ENCODE measurements at regions of chr18 and their contacts with region 1.

Region 1: GRCh38 chr18:58493516-58494253 is 135.2 kb downstream of the ALPK2 start:
- DNase-seq: peak; percentile 28
- ATAC-seq: peak; percentile 94
- H3K4me3 ChIP-seq: no peak overlapping the region
- H3K27ac ChIP-seq: no peak overlapping the region
- H3K4me1 ChIP-seq: peaks cover 13% of the 10 kb centered on the region
- H3K27me3 ChIP-seq: no peaks in the 10 kb centered on the region
- CTCF ChIP-seq: peak; percentile 75 to 90 (median 85)
- EP300 ChIP-seq: no peak
- POLR2A ChIP-seq: no peak
- RAD21 ChIP-seq: peak; percentile 81

Region 2: GRCh38 chr18:58195278-58195765 is 298.4 kb before region 1 on chr18:
- CTCF ChIA-PET with region 1: interaction called, 4 read pairs
- POLR2A ChIA-PET with region 1: no interaction called
- RAD21 ChIA-PET with region 1: interaction called, 3 read pairs
- SMC1A ChIA-PET with region 1: interaction called, 3 read pairs
- in situ Hi-C with region 1: no loop called
- intact Hi-C with region 1: loop called (anchors 10 kb)
- DNase-seq: no peak
- ATAC-seq: peak; percentile 83
- H3K4me3 ChIP-seq: peak overlapping the region; percentile 64
- H3K27ac ChIP-seq: no peak overlapping the region
- H3K4me1 ChIP-seq: no peaks in the 10 kb centered on the region
- H3K27me3 ChIP-seq: no peaks in the 10 kb centered on the region
- CTCF ChIP-seq: no peak
- EP300 ChIP-seq: no peak
- POLR2A ChIP-seq: no peak
- RAD21 ChIP-seq: no peak

Region 3: GRCh38 chr18:58402247-58402646 is 91.4 kb before region 1 on chr18:
- CTCF ChIA-PET with region 1: interaction called, 9 read pairs
- POLR2A ChIA-PET with region 1: interaction called, 4 read pairs
- RAD21 ChIA-PET with region 1: interaction called, 5 read pairs
- SMC1A ChIA-PET with region 1: interaction called, 5 read pairs
- in situ Hi-C with region 1: no loop called
- intact Hi-C with region 1: loop called (anchors 1 kb)
- DNase-seq: no peak
- ATAC-seq: no peak
- H3K4me3 ChIP-seq: no peak overlapping the region
- H3K27ac ChIP-seq: no peak overlapping the region
- H3K4me1 ChIP-seq: peaks cover 11% of the 10 kb centered on the region; the same call in 1 of the 2 replicates
- H3K27me3 ChIP-seq: no peaks in the 10 kb centered on the region
- CTCF ChIP-seq: no peak
- EP300 ChIP-seq: no peak
- POLR2A ChIP-seq: no peak
- RAD21 ChIP-seq: no peak

Region 4: DNA sequence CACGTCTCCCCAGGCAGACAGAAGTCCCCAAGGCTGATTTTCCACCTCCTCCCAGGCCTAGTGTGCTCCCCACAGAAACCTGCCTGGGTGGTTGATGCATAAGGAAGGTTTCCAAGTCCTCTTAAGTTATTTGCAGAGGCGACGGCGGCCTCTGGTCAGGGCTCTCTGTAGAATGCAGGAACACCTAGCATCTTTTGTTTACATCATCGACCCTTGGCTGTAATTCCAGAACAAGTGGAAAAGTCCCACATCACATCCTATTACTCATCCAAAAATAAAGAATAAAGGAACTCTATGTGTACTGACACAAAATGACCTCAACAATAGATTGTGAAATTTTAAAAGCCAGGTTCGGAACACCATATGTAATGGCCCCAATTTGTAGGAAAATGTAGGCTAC is 75.9 kb before region 1 on chr18:
- CTCF ChIA-PET with region 1: no interaction called
- POLR2A ChIA-PET with region 1: no interaction called
- RAD21 ChIA-PET with region 1: no interaction called
- SMC1A ChIA-PET with region 1: no interaction called
- in situ Hi-C with region 1: no loop called
- intact Hi-C with region 1: no loop called
- DNase-seq: no peak
- ATAC-seq: no peak
- H3K4me3 ChIP-seq: no peak overlapping the region
- H3K27ac ChIP-seq: no peak overlapping the region
- H3K4me1 ChIP-seq: no peaks in the 10 kb centered on the region
- H3K27me3 ChIP-seq: no peaks in the 10 kb centered on the region; a peak in 3 of 4 replicates
- CTCF ChIP-seq: no peak
- EP300 ChIP-seq: no peak
- POLR2A ChIP-seq: no peak
- RAD21 ChIP-seq: no peak

Region 5: DNA sequence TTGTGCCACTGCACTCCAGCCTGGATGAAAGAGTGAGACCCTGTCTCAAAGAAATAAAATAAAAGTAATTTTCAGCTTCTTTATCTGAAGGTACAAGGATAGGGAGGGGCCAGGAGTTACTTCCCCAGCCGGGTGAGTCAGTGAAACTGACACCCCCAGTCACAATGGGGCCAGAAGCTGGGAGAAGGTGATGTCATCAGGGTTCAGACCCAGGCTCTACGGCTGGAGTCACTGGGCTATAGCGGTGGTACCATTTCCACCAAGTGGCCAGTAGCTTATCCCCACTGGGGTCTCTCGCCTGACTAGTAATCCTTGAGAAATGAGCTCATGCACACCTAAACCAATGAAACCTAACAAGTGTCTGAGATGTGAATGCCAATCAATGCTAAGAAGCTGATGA is 27.3 kb after region 1 on chr18:
- CTCF ChIA-PET with region 1: interaction called, 13 read pairs
- POLR2A ChIA-PET with region 1: no interaction called
- RAD21 ChIA-PET with region 1: interaction called, 57 read pairs
- SMC1A ChIA-PET with region 1: interaction called, 66 read pairs
- in situ Hi-C with region 1: no loop called
- intact Hi-C with region 1: no loop called
- DNase-seq: no peak
- ATAC-seq: peak; percentile 73
- H3K4me3 ChIP-seq: no peak overlapping the region
- H3K27ac ChIP-seq: no peak overlapping the region
- H3K4me1 ChIP-seq: peaks cover 16% of the 10 kb centered on the region
- H3K27me3 ChIP-seq: no peaks in the 10 kb centered on the region
- CTCF ChIP-seq: no peak
- EP300 ChIP-seq: no peak
- POLR2A ChIP-seq: no peak
- RAD21 ChIP-seq: no peak

Region 6: DNA sequence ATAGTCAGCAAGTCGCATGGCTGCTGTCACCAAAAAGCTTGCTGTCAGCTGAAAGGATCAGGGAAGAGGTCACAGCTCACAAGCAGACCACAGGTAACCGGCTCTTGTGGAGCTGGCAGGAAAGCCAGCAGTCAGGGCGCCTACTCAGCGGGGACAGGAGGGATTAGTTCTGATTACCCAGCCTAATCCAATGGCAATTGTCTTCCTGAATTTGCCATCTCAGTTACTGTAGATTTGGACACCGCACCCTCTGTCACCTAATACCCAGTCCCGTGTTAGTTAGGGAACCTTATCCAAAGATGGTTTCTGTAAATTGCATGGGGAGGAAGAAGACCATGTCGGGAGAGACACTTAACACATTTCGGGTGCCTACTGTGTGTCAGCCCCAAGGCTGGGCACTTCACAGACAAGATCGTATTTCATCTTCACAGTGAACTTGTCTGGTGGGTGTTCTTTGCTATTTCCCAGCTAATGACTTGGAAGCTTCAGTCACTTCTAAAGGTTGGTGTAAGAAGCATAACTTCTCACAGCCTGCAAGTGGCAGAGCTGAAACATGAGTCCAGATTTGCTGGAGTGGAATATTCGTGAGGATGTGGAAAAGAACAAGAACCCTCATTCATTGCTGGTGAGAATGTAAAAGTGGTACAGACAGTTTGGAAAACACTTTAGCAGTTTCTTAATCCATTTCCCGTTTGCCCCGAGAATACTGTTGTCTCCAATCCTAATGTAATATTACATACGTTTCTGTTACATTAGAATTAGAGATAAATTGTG is 125.3 kb after region 1 on chr18:
- CTCF ChIA-PET with region 1: no interaction called
- POLR2A ChIA-PET with region 1: no interaction called
- RAD21 ChIA-PET with region 1: no interaction called
- SMC1A ChIA-PET with region 1: no interaction called
- in situ Hi-C with region 1: no loop called
- intact Hi-C with region 1: no loop called
- DNase-seq: no peak
- ATAC-seq: no peak
- H3K4me3 ChIP-seq: no peak overlapping the region
- H3K27ac ChIP-seq: no peak overlapping the region
- H3K4me1 ChIP-seq: peaks cover 22% of the 10 kb centered on the region
- H3K27me3 ChIP-seq: no peaks in the 10 kb centered on the region
- CTCF ChIP-seq: no peak
- EP300 ChIP-seq: no peak
- POLR2A ChIP-seq: no peak
- RAD21 ChIP-seq: 0 out of 2 replicates have a peak, but pooled peaks have one; percentile 7

Measured in GM12878 (cell line).